PC-9 (cell line): ENCODE measurements at regions of chr7 and their contacts with region 1.

Region 1: GRCh38 chr7:100827330-100828227 is at the start of gene EPHB4:
- DNase-seq: peak in 1 of 2 experiments; percentile 85
- H3K4me3 ChIP-seq: peak within 1 kb of the TSS; percentile 68
- H3K27ac ChIP-seq: no peak within 1 kb of the TSS
- H3K4me1 ChIP-seq: peaks cover 12% of the 10 kb centered on the region; the same call in 1 of the 2 replicates
- H3K27me3 ChIP-seq: no peaks in the 10 kb centered on the region
- CTCF ChIP-seq: no peak; the same call in 1 of the 2 replicates
- total RNA-seq, gene EPHB4: 79.4 and 94.6 TPM in 2 replicates

Region 2: DNA sequence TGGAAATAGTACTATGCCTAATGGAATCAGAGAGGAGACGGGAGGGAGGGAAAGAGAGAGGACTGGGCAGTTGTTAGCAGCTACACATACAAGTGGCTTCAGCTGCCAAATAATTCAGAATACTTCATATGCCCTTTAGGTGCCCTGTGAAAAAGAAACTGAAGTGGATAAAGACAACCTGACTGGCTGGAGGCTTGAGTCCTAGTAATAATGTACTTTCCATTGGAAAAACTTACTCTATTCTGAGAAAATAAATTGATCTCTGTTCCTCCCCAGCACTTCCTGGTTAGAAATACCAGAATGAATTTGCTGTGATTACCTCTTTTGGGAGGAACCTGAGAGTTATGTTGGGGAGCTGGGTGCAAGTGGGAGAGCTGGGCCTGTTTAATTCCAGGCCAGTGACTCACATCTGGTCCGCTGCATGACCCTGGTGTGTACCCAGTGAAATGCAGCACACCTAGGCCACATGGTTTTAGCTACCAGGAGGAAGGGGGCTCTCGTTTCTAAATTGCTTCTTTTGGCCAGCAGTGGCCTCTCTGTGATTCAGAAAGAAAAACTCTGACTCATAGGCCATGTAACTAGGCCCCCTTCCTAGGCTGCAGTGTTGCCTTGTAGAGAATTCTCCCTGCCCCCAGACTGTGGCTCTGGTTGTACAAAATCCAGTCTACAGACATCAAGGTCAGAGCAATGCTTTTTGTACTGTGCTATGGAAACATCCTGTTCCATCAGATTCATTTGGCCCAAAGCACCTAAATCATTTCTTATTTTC is 282.0 kb before region 1 on chr7:
- CTCF ChIA-PET with region 1: no interaction called
- POLR2A ChIA-PET with region 1: no interaction called
- intact Hi-C with region 1: loop called (anchors 2 kb)
- DNase-seq: peak; percentile 89 to 96
- H3K4me3 ChIP-seq: peak overlapping the region; percentile 33; the same call in 1 of the 2 replicates
- H3K27ac ChIP-seq: peak overlapping the region; percentile 98
- H3K4me1 ChIP-seq: peaks cover 84% of the 10 kb centered on the region
- H3K27me3 ChIP-seq: no peaks in the 10 kb centered on the region
- CTCF ChIP-seq: no peak

Region 3: GRCh38 chr7:100563809-100564400 is 263.7 kb before region 1 on chr7:
- CTCF ChIA-PET with region 1: no interaction called
- POLR2A ChIA-PET with region 1: no interaction called
- intact Hi-C with region 1: no loop called
- DNase-seq: peak in 1 of 2 experiments; percentile 80
- H3K4me3 ChIP-seq: no peak overlapping the region
- H3K27ac ChIP-seq: no peak overlapping the region
- H3K4me1 ChIP-seq: 0 out of 2 replicates have a peak, but pooled peaks cover 8% of the 10 kb centered on the region
- H3K27me3 ChIP-seq: no peaks in the 10 kb centered on the region
- CTCF ChIP-seq: peak; percentile 96

Region 4: DNA sequence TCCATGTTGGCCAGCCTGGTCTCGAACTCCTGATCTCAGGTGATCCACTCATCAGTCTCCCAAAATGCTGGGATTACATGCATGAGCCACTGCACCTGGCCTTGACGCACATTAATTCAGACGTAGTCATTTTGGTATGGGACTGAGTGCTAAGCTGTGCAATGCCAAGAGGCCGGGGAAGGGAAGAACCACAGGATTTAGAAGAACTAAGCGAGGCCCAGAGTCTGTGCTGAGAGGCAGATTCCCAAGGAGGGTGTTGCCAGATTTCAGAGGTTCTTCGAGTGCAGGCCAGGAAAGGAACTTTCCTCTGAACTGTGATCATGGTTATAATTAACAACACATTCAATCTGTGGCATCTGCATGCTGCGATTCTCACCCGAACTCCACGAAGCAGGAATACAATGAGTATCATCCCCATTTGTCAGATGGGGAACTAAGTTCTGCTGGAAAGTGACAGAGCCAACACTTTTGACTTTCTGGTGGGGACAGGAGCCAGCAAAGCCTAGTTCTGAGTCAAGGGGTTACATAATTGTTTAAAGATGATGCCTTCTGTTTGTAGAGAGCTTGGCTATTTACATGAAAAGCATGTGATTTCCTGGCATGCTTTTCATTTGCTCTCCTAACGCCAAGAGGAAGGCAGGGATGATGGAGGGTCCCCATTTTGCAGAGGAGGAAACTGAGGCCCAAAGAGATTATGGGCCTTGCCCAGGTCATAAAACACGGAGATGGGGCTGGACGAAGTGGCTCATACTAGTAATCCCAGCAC is 100.4 kb before region 1 on chr7:
- CTCF ChIA-PET with region 1: interaction called, 11 read pairs
- POLR2A ChIA-PET with region 1: no interaction called
- intact Hi-C with region 1: loop called (anchors 5 kb)
- DNase-seq: no peak
- H3K4me3 ChIP-seq: no peak overlapping the region
- H3K27ac ChIP-seq: no peak overlapping the region
- H3K4me1 ChIP-seq: peaks cover 19% of the 10 kb centered on the region
- H3K27me3 ChIP-seq: no peaks in the 10 kb centered on the region
- CTCF ChIP-seq: no peak

Region 5: GRCh38 chr7:100803398-100804233 is 24.0 kb before region 1 on chr7:
- CTCF ChIA-PET with region 1: interaction called, 5 read pairs
- POLR2A ChIA-PET with region 1: interaction called, 8 read pairs
- intact Hi-C with region 1: loop called (anchors 1 kb)
- DNase-seq: peak in 1 of 2 experiments; percentile 76
- H3K4me3 ChIP-seq: no peak overlapping the region
- H3K27ac ChIP-seq: 0 out of 2 replicates have a peak overlapping the region, but pooled peaks have one; percentile 67
- H3K4me1 ChIP-seq: peaks cover 52% of the 10 kb centered on the region
- H3K27me3 ChIP-seq: no peaks in the 10 kb centered on the region
- CTCF ChIP-seq: no peak

Region 6: GRCh38 chr7:100867040-100867775 is 39.6 kb after region 1 on chr7 and contains the start of gene TRIP6:
- CTCF ChIA-PET with region 1: no interaction called
- POLR2A ChIA-PET with region 1: interaction called, 3 read pairs
- intact Hi-C with region 1: loop called (anchors 5 kb)
- DNase-seq: peak; percentile 80 to 92
- H3K4me3 ChIP-seq: peak within 1 kb of the TSS; percentile 99
- H3K27ac ChIP-seq: peak within 1 kb of the TSS; percentile 68
- H3K4me1 ChIP-seq: peaks cover 18% of the 10 kb centered on the region
- H3K27me3 ChIP-seq: no peaks in the 10 kb centered on the region
- CTCF ChIP-seq: no peak
- total RNA-seq, gene TRIP6: 89.3 and 91.4 TPM in 2 replicates

Region 7: GRCh38 chr7:100983451-100984187 is 156.0 kb after region 1 on chr7:
- CTCF ChIA-PET with region 1: no interaction called
- POLR2A ChIA-PET with region 1: no interaction called
- intact Hi-C with region 1: no loop called
- DNase-seq: peak in 1 of 2 experiments; percentile 82
- H3K4me3 ChIP-seq: no peak overlapping the region
- H3K27ac ChIP-seq: no peak overlapping the region
- H3K4me1 ChIP-seq: no peaks in the 10 kb centered on the region
- H3K27me3 ChIP-seq: peaks cover 41% of the 10 kb centered on the region; the same call in 1 of the 2 replicates
- CTCF ChIP-seq: no peak

Region 8: DNA sequence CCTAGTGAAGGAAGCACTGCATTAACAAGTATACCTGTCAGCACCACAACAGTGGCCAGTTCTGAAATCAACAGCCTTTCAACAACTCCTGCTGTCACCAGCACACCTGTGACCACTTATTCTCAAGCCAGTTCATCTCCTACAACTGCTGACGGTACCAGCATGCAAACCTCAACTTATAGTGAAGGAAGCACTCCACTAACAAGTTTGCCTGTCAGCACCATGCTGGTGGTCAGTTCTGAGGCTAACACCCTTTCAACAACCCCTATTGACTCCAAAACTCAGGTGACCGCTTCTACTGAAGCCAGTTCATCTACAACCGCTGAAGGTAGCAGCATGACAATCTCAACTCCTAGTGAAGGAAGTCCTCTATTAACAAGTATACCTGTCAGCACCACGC is 208.4 kb after region 1 on chr7:
- CTCF ChIA-PET with region 1: no interaction called
- POLR2A ChIA-PET with region 1: no interaction called
- intact Hi-C with region 1: no loop called
- DNase-seq: no peak
- H3K4me3 ChIP-seq: no peak overlapping the region
- H3K27ac ChIP-seq: no peak overlapping the region
- H3K4me1 ChIP-seq: no peaks in the 10 kb centered on the region
- H3K27me3 ChIP-seq: peaks cover 94% of the 10 kb centered on the region
- CTCF ChIP-seq: no peak

Region 9: GRCh38 chr7:101066141-101066832 is 238.7 kb after region 1 on chr7:
- CTCF ChIA-PET with region 1: no interaction called
- POLR2A ChIA-PET with region 1: no interaction called
- intact Hi-C with region 1: no loop called
- DNase-seq: no peak
- H3K4me3 ChIP-seq: no peak overlapping the region
- H3K27ac ChIP-seq: no peak overlapping the region
- H3K4me1 ChIP-seq: no peaks in the 10 kb centered on the region
- H3K27me3 ChIP-seq: peaks cover 20% of the 10 kb centered on the region
- CTCF ChIP-seq: no peak